Cardiac septum (tissue), 1 donor: ENCODE measurements at regions of chr22 and their contacts with region 1.

Region 1: GRCh38 chr22:42437488-42438292 is 5.5 kb upstream of the NFAM1 start:
- DNase-seq: peak; percentile 91

Region 2: GRCh38 chr22:41966607-41967240 is 471.0 kb before region 1 on chr22:
- intact Hi-C with region 1: loop called (anchors 10 kb)
- DNase-seq: no peak

Region 3: DNA sequence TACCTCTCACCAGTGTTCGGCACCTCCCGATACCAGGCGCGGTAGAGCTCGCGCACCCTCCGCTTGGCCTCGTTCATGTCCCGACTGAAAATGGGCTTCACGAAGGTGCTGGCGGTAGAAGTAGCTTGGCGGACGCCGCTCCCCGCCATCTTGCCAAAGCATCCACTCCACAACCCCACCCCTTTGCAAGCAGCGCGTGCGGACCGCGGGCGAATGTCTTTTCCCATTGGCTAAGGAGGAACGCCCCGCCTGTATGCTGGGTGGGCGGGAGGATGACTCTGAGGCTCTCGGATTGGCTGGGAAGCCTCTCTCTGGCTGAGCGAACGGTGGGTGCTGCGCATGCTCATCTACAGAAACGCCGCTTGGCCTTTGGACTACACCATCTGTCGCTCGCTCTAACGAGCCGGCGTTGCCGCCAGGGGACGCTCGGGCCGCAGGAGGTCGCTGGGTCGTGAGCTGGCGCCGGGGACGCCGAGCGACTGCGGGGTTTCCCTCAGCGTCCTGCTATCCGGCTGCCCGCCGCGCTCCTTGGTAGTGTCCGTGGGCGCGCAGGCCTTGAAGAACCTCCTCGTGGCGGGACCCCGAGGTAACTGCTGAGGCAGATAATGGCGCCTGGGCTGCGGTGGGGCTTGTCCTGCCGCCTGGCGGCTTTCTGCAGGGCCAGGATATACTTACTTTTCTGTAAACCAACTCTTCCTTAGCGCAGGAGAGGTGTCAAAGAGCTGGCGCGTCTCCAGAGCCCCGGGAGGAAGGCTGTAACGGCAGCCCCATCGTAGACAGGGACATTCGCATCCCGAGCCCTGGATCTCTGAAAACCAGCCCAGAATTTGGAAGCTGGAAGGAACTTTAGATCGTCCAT is 346.9 kb before region 1 on chr22 and contains the start of gene NDUFA6:
- intact Hi-C with region 1: loop called (anchors 5 kb)
- DNase-seq: peak; percentile 100
- total RNA-seq, gene NDUFA6: 183 TPM

Region 4: DNA sequence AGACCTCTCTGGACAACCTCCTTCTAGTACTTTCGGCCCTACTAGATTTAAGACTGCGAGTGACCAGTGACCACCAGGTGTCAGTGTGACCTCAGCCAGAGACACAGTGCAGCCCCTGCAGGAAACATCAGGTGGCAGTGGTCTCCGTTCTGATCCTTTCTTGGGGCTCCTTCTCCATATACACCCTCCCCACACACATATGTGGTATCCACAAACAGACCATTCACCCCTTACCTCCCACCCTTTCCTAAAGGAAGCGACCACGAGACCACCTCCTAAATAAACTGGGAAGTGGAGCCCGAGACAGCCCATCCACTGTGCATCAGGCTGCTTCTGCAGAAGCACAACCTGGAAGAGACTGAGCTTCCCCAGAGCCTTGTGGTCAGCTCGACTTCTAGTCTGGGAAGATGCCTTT is 268.6 kb before region 1 on chr22:
- intact Hi-C with region 1: loop called (anchors 1 kb)
- DNase-seq: no peak

Region 5: GRCh38 chr22:42270512-42271417 is 166.9 kb before region 1 on chr22 and contains the start of gene TCF20:
- intact Hi-C with region 1: loop called (anchors 5 kb)
- DNase-seq: peak; percentile 92
- total RNA-seq, gene TCF20: 15.3 TPM

Region 6: DNA sequence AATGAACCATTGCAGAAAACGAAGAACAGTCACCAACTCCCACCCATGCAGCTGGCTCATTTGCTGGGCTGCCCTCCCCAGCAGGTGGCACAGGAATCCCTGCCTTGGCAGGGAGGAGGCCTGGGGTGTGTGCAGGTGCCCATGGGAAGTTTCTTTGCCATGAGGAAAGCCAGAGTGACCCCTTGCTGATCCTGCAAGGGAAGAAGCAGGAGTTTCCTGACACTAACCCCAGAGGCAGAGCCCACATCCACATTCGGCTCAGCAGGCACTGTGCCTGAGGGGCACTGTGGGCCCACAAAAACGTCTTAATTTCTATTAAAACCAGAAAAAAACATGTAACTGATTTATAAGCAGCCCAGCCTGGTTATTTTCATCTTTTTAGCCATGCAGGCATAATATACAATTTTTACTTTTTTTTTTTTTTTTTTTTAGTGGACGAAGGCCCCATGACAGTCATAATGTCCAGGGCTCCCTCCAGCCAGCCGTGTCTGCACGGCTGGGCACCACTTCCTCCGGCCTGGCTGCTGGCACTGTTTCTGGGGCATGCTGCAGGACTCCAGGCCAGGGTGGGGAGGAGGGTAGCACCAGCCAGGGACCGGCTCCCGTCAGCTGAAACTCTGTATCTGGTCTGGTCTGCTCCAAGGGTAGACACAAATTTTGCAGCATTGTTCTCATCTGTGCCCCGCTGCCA is 90.7 kb after region 1 on chr22:
- intact Hi-C with region 1: no loop called
- DNase-seq: no peak